ENCODE measurements at regions of chr14 and their contacts with region 1.

Region 1: DNA sequence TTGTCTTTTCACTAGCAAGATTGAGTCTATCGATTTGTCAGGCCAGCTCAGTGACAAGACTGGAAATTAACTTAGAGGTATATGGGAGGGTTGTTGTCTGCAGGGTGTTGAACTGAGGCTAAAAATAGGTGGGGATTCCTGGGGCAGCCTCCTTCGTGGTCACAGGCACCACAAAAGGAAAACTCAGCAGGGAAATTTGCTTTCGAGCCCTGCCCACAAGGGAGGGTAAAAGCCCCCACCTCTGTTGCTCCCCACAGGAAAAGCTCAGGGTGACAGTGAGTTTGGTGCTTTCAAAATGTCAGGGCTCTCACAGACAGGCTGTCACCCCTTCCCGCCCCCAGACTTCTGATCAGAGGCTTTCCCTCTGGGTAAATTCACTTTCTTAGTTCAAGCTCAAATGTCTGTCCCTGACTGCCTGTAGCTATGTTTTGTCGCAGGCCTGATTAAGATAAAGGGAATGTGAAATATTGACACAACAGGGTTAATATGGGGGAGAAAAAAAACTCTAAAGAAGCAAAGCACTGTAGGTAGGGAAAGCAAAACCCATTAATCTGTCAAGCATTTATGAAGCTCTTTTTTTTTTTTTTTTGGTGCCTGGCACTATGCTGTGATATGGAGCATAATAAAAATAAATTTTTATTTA is 11.7 kb upstream of the NFKBIA start:
- DNase-seq: no peak
- ATAC-seq: no peak
- H3K4me3 ChIP-seq: no peak overlapping the region
- H3K27ac ChIP-seq: peak overlapping the region in 1 of 2 experiments; percentile 53; a peak in 2 of 6 replicates
- H3K4me1 ChIP-seq: peaks cover 37% of the 10 kb centered on the region
- CTCF ChIP-seq: no peak
- EP300 ChIP-seq: no peak
- POLR2A ChIP-seq: no peak
- RAD21 ChIP-seq: no peak

Region 2: GRCh38 chr14:35134328-35135123 is 281.7 kb before region 1 on chr14:
- CTCF ChIA-PET with region 1: interaction called, 10 read pairs
- POLR2A ChIA-PET with region 1: no interaction called
- DNase-seq: no peak
- ATAC-seq: no peak
- H3K4me3 ChIP-seq: no peak overlapping the region
- H3K27ac ChIP-seq: no peak overlapping the region
- H3K4me1 ChIP-seq: no peaks in the 10 kb centered on the region
- CTCF ChIP-seq: no peak
- EP300 ChIP-seq: no peak
- POLR2A ChIP-seq: no peak
- RAD21 ChIP-seq: no peak

Region 3: DNA sequence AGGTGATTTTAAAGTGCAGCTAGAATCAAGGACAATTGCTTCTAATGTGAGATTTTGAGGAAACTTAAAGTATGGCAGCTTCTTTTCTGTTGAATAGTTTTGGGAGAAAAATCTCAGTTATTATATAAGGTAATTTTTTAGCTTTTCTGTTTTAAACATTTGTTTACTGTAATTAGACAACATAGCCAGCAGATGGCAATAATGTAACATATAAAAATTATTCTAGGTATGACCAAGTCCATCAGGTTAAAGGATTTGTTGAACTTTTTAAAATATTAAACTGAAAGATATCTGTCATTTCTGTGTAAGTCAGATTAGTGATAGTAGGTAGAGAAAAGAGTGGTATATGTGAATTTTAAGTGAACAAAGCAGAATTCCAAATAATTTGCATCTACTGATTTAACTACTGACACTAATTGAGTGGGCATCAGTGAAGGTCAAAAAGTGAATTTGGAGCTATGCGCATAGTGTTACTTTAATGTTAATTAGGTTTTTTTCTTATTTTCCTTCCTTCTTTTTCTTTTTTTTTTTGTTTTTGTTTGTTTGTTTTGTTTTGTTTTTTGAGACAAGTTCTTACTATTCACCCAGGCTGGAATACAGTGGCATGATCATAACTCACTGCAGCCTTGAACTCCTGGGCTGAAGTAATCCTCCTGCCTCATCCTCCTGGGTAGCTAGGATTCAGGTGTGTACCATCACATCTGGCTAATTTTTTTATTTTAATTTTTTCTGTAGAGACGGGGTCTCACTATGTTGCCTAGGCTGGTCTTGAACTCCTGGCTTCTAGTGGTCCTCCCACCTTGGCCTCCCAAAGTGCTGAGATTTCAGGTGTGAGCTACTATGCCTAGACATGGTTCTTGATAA is 275.3 kb before region 1 on chr14:
- CTCF ChIA-PET with region 1: interaction called, 40 read pairs
- POLR2A ChIA-PET with region 1: no interaction called
- DNase-seq: no peak
- ATAC-seq: no peak
- H3K4me3 ChIP-seq: no peak overlapping the region
- H3K27ac ChIP-seq: no peak overlapping the region
- H3K4me1 ChIP-seq: no peaks in the 10 kb centered on the region
- CTCF ChIP-seq: peak; percentile 31; the same call in 2 of the 3 replicates
- EP300 ChIP-seq: no peak
- POLR2A ChIP-seq: no peak
- RAD21 ChIP-seq: peak; percentile 34 to 50; a peak in 3 of 5 replicates

Region 4: GRCh38 chr14:35215110-35215876 is 200.9 kb before region 1 on chr14:
- CTCF ChIA-PET with region 1: interaction called, 71 read pairs
- POLR2A ChIA-PET with region 1: no interaction called
- DNase-seq: peak; percentile 36 to 69
- ATAC-seq: peak; percentile 66 to 88; a peak in 4 of 6 replicates
- H3K4me3 ChIP-seq: no peak overlapping the region
- H3K27ac ChIP-seq: peak overlapping the region; percentile 69 to 75; a peak in 5 of 6 replicates
- H3K4me1 ChIP-seq: peaks cover 33% of the 10 kb centered on the region
- CTCF ChIP-seq: peak; percentile 73
- EP300 ChIP-seq: no peak
- POLR2A ChIP-seq: no peak
- RAD21 ChIP-seq: peak; percentile 77 to 81

Region 5: GRCh38 chr14:35229495-35230089 is 186.6 kb before region 1 on chr14:
- CTCF ChIA-PET with region 1: interaction called, 21 read pairs
- POLR2A ChIA-PET with region 1: no interaction called
- DNase-seq: peak in 1 of 2 experiments; percentile 50
- ATAC-seq: peak; percentile 47 to 69; a peak in 4 of 6 replicates
- H3K4me3 ChIP-seq: no peak overlapping the region
- H3K27ac ChIP-seq: no peak overlapping the region; a peak in 1 of 6 replicates
- H3K4me1 ChIP-seq: peaks cover 9% of the 10 kb centered on the region; the same call in 2 of the 3 replicates
- CTCF ChIP-seq: peak; percentile 51
- EP300 ChIP-seq: no peak
- POLR2A ChIP-seq: no peak
- RAD21 ChIP-seq: peak; percentile 64 to 66

Region 6: DNA sequence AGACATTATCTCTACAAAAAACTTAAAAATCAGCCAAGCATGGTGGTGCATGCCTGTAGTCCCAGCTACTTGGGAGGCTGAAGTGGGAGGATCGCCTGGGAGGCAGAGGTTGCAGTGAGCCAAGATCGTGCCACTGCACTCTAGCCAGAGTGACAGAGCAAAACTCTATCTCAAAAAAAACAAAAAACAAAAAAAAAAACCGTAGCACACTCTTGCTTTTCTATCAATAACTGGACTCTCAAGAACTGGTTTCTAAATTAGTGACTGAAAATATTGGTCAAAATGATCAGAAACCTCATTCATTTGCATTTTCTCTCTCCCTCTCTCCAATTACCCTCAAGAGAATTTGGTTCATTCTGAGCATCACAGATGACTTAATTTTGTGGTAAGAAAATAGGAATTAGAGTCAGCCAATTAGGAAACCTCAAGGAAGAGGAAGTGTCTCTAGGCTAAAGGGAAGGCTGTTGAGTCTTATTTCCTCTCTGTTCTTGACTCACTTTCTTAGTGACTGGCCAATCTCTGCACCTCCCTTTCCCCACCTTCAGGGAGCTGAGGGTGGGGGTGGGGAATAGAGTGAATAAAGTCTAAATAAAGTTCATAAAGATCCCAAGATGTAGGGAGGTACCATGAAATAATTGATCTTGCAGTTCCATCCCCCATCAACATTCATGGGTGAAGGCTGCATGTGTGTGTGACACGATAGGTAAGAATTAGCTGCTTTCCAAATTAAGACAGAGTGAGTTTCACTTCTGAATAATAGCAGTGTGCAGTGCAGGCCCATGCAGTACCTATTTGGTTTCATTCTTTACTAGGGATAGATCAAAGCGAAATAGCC is 130.8 kb before region 1 on chr14:
- CTCF ChIA-PET with region 1: interaction called, 12 read pairs
- POLR2A ChIA-PET with region 1: no interaction called
- DNase-seq: no peak
- ATAC-seq: no peak
- H3K4me3 ChIP-seq: no peak overlapping the region
- H3K27ac ChIP-seq: no peak overlapping the region
- H3K4me1 ChIP-seq: peaks cover 6% of the 10 kb centered on the region; the same call in 1 of the 3 replicates
- CTCF ChIP-seq: no peak
- EP300 ChIP-seq: no peak
- POLR2A ChIP-seq: no peak
- RAD21 ChIP-seq: no peak